A673 (cell line): ENCODE measurements at regions of chr2 and their contacts with region 1.

Region 1: GRCh38 chr2:207950063-207950760 is 75.1 kb downstream of the PLEKHM3 start:
- DNase-seq: no peak
- H3K4me3 ChIP-seq: no peak overlapping the region
- H3K27ac ChIP-seq: no peak overlapping the region
- H3K4me1 ChIP-seq: no peaks in the 10 kb centered on the region
- H3K27me3 ChIP-seq: no peaks in the 10 kb centered on the region
- CTCF ChIP-seq: no peak

Region 2: DNA sequence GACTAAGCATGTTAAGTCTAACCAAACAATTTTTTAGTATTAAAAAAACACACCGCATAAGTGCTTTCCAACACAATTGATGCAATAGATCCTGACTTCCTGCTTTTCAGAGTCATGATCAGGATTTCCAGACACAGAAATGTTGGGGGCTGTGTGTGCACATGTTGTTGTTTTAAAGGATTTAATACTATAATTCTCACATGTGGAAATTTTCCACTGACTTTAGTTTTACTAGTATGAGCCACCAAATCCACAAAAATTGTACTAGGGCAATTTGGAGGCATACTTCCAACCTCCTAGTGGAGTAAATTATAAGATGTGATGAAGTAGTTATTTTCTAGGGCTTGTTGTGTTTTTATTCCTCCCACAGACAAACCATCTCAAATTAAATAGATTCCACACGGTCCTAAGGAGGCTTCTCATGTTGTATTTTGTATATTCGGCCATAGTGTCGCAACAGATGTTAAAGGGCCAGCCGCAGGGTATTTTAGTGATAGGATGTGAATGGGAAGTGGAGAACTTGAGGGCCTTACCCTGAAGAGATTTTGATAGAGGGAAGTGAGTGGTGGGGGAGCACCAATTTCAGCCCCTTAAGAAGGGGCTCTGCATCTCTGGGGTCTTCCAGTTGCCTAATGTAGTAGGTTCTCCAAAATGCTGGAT is 675.6 kb before region 1 on chr2:
- CTCF ChIA-PET with region 1: no interaction called
- POLR2A ChIA-PET with region 1: no interaction called
- intact Hi-C with region 1: no loop called
- DNase-seq: no peak
- H3K4me3 ChIP-seq: no peak overlapping the region
- H3K27ac ChIP-seq: no peak overlapping the region
- H3K4me1 ChIP-seq: no peaks in the 10 kb centered on the region
- H3K27me3 ChIP-seq: no peaks in the 10 kb centered on the region
- CTCF ChIP-seq: no peak

Region 3: GRCh38 chr2:208125251-208125650 is 175.0 kb after region 1 on chr2:
- CTCF ChIA-PET with region 1: no interaction called
- POLR2A ChIA-PET with region 1: interaction called, 10 read pairs
- intact Hi-C with region 1: no loop called
- DNase-seq: no peak
- H3K4me3 ChIP-seq: no peak overlapping the region
- H3K27ac ChIP-seq: no peak overlapping the region
- H3K4me1 ChIP-seq: no peaks in the 10 kb centered on the region
- H3K27me3 ChIP-seq: peaks cover 4% of the 10 kb centered on the region
- CTCF ChIP-seq: no peak